ENCODE measurements at regions of chr19 and their contacts with region 1.

Region 1: GRCh38 chr19:47243776-47244547 is 12.4 kb upstream of the CCDC9 start:
- DNase-seq: peak; percentile 92
- H3K4me3 Mint-ChIP-seq: peak overlapping the region; percentile 84
- H3K27ac Mint-ChIP-seq: peak overlapping the region; percentile 89
- H3K4me1 Mint-ChIP-seq: peaks cover 16% of the 10 kb centered on the region
- H3K27me3 Mint-ChIP-seq: peaks cover 3% of the 10 kb centered on the region

Region 2: DNA sequence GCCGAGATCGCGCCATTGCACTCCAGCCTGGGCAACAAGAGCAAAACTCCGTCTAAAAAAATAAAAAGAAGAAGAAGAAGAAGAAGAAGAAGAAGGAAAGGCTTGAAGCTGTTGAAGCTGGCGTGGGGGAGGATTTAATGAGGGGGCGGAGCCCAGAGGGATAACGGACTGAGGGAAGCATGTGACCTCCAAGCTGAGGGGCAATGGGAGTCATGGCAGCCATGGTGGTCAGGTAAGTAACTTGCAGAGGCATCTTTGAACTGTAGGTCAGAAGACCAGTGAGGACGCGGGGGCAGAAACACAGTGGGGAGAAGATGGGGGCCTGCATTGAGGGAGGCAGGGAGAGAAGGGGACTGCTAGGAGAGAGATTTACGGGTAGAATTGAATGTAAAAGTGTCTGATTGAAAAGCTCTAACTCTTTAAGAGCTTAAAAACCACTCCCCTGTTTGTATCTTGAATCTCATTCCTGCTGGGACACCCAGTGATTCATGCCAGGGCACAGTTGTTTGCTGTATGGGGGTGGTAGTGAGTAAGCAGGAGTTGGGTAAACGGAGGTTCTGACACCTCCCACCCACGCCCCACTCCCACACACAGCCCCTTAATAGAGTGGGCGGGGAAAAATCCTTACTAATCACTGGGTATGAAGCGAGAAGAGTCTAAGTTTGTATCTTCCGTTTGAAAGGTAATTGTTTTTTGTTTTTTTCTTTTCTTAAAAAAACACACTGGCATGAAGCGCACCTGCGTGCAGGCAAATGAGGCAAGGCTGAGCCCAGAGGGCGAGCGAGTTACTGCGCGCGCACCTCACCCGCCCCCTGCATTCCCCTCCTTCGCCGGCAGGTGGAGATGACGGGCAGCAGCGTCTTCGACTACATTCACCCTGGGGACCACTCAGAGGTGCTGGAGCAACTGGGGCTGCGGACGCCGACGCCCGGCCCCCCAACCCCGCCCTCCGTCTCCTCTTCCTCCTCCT is 208.6 kb before region 1 on chr19:
- intact Hi-C with region 1: loop called (anchors 5 kb)
- DNase-seq: peak; percentile 94
- H3K4me3 Mint-ChIP-seq: peak overlapping the region; percentile 83
- H3K27ac Mint-ChIP-seq: peak overlapping the region; percentile 87
- H3K4me1 Mint-ChIP-seq: peaks cover 21% of the 10 kb centered on the region
- H3K27me3 Mint-ChIP-seq: peaks cover 9% of the 10 kb centered on the region

Region 3: DNA sequence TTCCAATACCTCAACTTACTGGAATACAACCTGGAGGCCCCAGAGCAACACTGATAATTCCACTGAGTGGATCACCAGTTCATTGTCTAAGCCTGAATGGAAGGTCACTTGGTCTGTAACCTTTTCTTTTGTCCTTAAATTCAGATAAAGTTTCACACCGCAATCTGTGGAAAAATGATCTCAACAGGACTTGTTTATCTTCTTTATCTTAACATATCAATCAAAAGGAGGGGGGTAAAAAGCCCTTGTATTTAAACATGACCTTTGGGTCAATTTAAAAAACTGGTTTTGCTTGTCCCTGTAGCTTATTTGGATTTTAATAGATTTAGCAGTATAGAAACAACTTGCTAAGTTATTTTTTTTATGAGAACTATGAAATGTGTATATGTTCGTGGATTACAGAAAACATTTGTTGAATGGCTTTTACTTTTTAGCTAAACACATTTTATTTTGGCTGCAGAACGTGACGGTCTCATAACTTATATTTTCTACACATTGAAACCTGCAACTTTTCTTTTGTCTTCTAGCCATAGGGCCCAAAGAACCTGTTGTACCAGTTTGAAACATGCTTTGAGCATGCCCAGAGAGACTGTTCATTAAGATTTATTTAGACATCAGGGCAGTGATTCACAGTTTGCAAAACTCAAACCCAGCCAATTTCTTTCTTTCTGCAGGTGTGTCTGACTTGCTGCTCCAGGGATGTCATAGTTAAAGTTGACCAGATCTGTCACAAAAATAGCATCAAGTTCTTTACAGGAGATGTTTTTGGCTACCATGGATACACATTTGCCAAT is 91.5 kb before region 1 on chr19:
- intact Hi-C with region 1: loop called (anchors 2 kb)
- DNase-seq: no peak
- H3K4me3 Mint-ChIP-seq: no peak overlapping the region
- H3K27ac Mint-ChIP-seq: peak overlapping the region; percentile 46
- H3K4me1 Mint-ChIP-seq: peaks cover 36% of the 10 kb centered on the region
- H3K27me3 Mint-ChIP-seq: no peaks in the 10 kb centered on the region

Region 4: DNA sequence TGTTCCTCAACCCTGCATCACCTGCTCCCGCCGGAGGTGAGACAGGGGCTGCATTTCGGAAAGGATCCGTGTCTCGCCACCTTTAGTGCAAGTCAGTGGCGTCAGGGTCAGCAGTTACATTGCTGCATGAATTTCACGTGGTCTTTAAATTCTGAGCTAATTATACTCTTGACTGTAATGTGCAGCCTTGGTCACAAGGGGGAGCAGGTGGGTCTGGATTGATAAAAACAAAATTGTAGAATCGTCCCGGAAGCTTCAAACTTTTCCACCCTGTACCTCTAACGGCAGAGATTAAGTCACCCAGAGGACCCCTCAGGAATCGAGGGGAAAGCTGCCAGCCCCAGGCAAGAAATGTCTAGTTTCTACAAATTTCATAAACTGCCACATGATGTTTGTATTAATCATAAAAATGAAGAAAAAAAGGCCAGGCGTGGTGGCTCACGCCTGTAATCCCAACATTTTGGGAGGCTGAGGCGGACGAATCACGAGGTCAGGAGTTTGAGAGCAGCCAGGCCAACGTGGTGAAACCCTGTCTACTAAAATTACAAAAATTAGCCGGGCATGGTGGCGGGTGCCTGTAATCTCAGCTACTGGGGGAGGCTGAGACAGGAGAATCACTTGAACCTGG is 33.2 kb before region 1 on chr19:
- intact Hi-C with region 1: loop called (anchors 1 kb)
- DNase-seq: peak; percentile 66
- H3K4me3 Mint-ChIP-seq: no peak overlapping the region
- H3K27ac Mint-ChIP-seq: peak overlapping the region; percentile 89
- H3K4me1 Mint-ChIP-seq: peaks cover 10% of the 10 kb centered on the region
- H3K27me3 Mint-ChIP-seq: no peaks in the 10 kb centered on the region

Region 5: DNA sequence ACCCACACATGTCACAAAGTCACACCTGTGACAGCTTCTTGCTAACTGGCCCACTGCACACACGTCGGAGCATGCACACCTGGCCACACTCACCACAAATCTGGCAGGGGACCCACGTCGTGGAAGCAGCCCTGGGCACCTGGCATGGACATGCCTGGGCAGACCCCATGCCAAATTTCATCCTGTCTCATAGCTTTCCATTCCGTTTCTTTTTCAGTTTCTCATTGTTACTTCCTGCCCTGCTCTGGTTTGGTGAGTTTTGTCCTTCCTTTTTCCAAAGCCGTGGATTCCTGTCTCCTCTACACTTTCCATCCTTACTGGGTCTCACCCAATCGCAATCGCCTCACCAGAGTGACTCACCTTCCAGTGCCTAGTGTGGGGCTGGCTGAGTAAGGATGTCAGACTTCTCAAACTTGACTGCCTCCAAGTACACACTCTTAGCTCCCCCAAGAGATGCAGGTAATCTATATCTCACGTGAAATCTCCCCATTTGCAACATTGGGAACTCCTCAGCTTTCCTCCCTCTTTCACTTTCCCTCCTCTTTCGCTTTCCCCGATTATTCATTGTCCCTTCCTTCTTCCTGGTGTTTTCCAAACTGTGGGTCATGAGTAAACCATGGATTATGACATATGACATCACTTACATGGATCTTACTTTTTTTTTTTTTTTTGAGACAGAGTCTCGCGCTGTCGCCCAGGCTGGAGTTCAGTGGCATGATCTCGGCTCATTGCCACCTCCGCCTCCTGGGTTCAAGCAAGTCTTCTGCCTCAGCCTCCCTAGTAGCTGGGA is 11.3 kb before region 1 on chr19:
- intact Hi-C with region 1: loop called (anchors 1 kb)
- DNase-seq: peak; percentile 25
- H3K4me3 Mint-ChIP-seq: peak overlapping the region; percentile 74
- H3K27ac Mint-ChIP-seq: peak overlapping the region; percentile 60
- H3K4me1 Mint-ChIP-seq: peaks cover 16% of the 10 kb centered on the region
- H3K27me3 Mint-ChIP-seq: peaks cover 2% of the 10 kb centered on the region

Region 6: DNA sequence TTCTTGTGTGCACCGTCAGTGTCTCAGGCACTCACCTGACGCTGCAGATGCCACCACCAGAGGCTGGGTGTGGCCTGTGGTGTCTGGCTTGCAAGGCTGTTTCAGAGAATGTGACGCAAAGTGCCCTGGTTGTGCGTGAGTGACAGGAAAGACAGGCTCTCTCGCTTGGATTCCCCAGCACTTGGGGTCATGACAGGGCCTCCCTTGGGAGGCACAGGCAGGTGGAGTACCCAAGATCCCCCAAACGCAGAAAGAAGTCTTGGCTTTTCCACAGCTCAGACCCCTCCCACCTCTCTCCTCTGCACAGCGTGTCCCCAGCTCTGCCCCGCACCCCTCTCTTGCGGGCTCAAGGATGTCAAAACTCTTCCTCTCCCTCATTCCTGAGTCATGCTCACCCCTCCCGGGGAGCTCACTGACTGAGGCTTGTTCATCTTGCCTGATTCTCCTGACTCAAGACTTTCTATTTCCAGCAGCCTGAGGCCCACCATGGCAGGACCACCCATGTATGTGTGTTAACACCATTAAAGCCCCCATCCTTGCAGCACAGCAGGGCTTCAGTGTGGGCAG is 126.2 kb after region 1 on chr19:
- intact Hi-C with region 1: no loop called
- DNase-seq: no peak
- H3K4me3 Mint-ChIP-seq: no peak overlapping the region
- H3K27ac Mint-ChIP-seq: no peak overlapping the region
- H3K4me1 Mint-ChIP-seq: no peaks in the 10 kb centered on the region
- H3K27me3 Mint-ChIP-seq: no peaks in the 10 kb centered on the region

Measured in activated T-helper 2 cell treated with anti-CD3 and anti-CD28 coated beads, Interferon-gamma antibody, Interleukin-2, Interleukin-4, amounts not matched to agents 10 μg/mL and 5 μg/mL and 100 μg/mL, durations not matched to agents 14 hours and 24 hours and 36 hours (primary cell).